ENCODE measurements at regions of chr2 and their contacts with region 1.

Region 1: GRCh38 chr2:64330281-64331113 is 123.5 kb upstream of the LGALSL start:
- DNase-seq: peak; percentile 47 to 50
- ATAC-seq: peak; percentile 59 to 75
- H3K4me3 ChIP-seq: peak overlapping the region; percentile 18 to 52 (median 46)
- H3K27ac ChIP-seq: peak overlapping the region; percentile 8 to 69 (median 60)
- H3K4me1 ChIP-seq: peaks cover 27 to 42% of the 10 kb centered on the region in 2 donors
- H3K27me3 ChIP-seq: no peaks in the 10 kb centered on the region
- CTCF ChIP-seq: peak; percentile 84 to 94 (median 92)
- POLR2A ChIP-seq: no peak

Region 2: DNA sequence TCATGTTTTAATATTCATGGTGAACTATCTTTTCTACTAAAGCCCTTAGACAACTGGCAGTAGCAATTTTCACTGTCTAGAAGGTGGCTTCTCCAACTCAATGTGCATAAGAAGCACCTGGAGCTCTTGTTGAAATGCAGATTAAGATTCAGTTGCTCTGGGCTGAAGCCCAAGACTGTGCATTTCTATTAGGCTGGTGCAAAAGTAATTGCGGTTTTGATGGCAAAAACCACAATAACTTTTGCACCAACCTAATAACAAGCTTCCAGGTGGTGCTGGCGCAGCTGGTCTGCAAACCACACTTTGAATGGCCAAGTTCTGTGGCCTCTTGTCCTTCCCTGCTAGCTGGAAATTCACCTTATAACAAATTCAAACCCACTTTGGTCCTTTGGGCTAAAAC is 284.6 kb before region 1 on chr2:
- in situ Hi-C with region 1: loop called in 2 of 4 experiments (anchors 5 kb)
- intact Hi-C with region 1: loop called (anchors 5 kb)
- DNase-seq: no peak
- ATAC-seq: no peak
- H3K4me3 ChIP-seq: no peak overlapping the region
- H3K27ac ChIP-seq: no peak overlapping the region
- H3K4me1 ChIP-seq: no peaks in the 10 kb centered on the region
- H3K27me3 ChIP-seq: no peaks in the 10 kb centered on the region
- CTCF ChIP-seq: no peak
- POLR2A ChIP-seq: no peak

Region 3: GRCh38 chr2:64291181-64291580 is 39.3 kb before region 1 on chr2:
- in situ Hi-C with region 1: no loop called
- intact Hi-C with region 1: no loop called
- DNase-seq: no peak
- ATAC-seq: no peak
- H3K4me3 ChIP-seq: no peak overlapping the region
- H3K27ac ChIP-seq: no peak overlapping the region
- H3K4me1 ChIP-seq: peaks cover 0 to 4% of the 10 kb centered on the region in 2 donors
- H3K27me3 ChIP-seq: no peaks in the 10 kb centered on the region
- CTCF ChIP-seq: no peak
- POLR2A ChIP-seq: no peak

Region 4: DNA sequence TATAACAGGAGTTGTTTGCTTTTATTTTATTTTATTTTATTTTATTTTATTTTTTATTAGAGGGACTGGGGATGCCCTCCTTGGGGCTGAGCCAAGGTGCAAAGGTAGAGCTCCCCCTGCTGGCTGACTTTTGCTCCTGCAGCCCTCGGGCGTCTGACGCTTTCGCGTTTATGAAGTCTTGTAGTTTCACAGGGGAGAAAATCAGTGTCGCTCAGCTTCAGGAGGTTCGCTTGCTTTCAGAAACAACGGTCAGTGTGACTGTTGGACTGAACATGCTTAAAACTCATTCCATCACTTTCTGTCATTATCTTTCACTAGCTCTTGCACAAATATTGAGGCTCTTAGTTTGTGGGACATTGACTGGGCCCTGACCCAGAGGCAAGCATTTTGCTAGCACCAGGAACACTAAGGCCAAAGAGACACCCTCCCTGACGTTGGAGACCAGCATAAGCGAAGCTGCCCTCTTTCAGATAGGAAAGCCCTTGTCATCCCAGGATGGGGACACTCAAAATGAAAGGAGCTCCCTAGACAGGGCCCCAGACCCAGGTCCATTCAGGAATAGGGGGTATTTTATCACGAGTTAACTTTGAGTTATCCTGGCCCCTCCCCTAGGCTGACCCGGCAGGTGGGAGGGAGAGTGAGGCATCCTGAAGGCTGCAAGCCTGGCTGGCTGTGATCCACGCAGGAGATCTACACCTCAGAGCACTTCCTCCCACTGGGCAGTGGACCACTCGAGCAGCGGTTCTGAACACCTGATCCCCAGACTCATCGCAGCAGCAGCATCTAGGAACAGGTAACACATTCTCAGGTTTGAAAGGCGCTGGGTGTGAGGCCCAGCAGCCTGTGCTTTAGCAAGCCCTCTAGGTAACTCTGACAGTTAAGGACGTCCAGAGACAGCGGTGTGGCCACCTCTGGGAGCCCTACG is 157.8 kb after region 1 on chr2:
- in situ Hi-C with region 1: loop called (anchors 5 kb)
- intact Hi-C with region 1: loop called (anchors 1 kb)
- DNase-seq: peak in 1 of 2 donors; percentile 38
- ATAC-seq: peak in 1 of 2 donors; percentile 83
- H3K4me3 ChIP-seq: no peak overlapping the region
- H3K27ac ChIP-seq: no peak overlapping the region
- H3K4me1 ChIP-seq: peaks cover 5 to 17% of the 10 kb centered on the region in 2 donors
- H3K27me3 ChIP-seq: no peaks in the 10 kb centered on the region
- CTCF ChIP-seq: peak; percentile 83 to 98 (median 92)
- POLR2A ChIP-seq: no peak

Region 5: GRCh38 chr2:64626963-64627760 is 296.7 kb after region 1 on chr2:
- in situ Hi-C with region 1: no loop called
- intact Hi-C with region 1: no loop called
- DNase-seq: no peak
- ATAC-seq: peak in 1 of 2 donors; percentile 67
- H3K4me3 ChIP-seq: no peak overlapping the region
- H3K27ac ChIP-seq: no peak overlapping the region
- H3K4me1 ChIP-seq: peaks cover 6 to 9% of the 10 kb centered on the region in 2 donors
- H3K27me3 ChIP-seq: no peaks in the 10 kb centered on the region
- CTCF ChIP-seq: no peak
- POLR2A ChIP-seq: no peak

Region 6: DNA sequence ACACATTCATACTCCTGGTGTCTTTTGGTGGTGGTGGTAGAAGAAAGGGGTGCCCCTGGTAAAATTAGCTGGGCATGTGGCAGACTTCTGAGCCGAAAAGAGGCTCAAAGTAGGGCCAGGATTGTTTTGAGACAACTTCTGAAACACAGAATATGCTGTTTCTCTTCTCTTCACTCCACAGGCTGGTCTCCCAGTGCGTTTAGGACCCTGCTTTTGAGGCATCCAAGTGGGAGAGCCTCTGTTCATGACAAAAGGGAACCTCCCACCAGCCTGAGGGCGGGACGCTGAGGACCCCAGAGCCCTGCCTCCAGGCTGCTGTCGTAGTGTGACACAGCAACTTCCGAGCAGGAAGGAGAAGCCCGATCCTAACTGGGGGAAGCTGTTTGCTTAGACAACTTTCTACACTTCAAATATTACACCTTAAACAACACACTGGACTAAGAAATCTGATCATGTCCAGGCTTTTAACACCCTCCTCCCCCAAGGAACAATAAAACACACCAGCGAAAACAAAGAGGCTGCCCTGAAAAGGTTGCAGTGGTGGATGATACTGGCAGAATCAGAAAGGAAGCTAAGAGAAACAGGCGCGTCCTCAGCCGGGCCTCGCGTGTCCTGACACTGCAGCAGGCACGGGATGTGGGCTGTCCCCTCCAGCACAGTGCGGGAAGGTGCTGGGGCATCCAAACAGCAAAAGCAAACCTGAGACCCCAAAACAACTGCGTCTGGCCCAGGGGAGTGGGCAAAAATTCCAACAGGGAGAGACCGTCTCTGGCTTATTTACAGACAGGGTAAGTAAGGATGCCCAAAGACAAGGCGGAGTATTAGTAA is 313.9 kb after region 1 on chr2:
- in situ Hi-C with region 1: no loop called
- intact Hi-C with region 1: loop called (anchors 5 kb)
- DNase-seq: peak; percentile 62 to 70
- ATAC-seq: peak; percentile 76 to 81
- H3K4me3 ChIP-seq: peak overlapping the region; percentile 49 to 61 (median 58)
- H3K27ac ChIP-seq: peak overlapping the region; percentile 85 to 93 (median 92)
- H3K4me1 ChIP-seq: peaks cover 54 to 58% of the 10 kb centered on the region in 2 donors
- H3K27me3 ChIP-seq: no peaks in the 10 kb centered on the region
- CTCF ChIP-seq: no peak
- POLR2A ChIP-seq: peak; percentile 67 to 82

Region 7: GRCh38 chr2:64873472-64873924 is 543.0 kb after region 1 on chr2:
- in situ Hi-C with region 1: loop called (anchors 25 kb)
- intact Hi-C with region 1: loop called (anchors 5 kb)
- DNase-seq: peak in 1 of 2 donors; percentile 68
- ATAC-seq: peak; percentile 83 to 90
- H3K4me3 ChIP-seq: peak overlapping the region; percentile 14 to 50 (median 36)
- H3K27ac ChIP-seq: no peak overlapping the region
- H3K4me1 ChIP-seq: peaks cover 0 to 7% of the 10 kb centered on the region in 2 donors
- H3K27me3 ChIP-seq: no peaks in the 10 kb centered on the region
- CTCF ChIP-seq: peak; percentile 90 to 98 (median 92)
- POLR2A ChIP-seq: no peak